ENCODE measurements at regions of chr12 and their contacts with region 1.

Region 1: DNA sequence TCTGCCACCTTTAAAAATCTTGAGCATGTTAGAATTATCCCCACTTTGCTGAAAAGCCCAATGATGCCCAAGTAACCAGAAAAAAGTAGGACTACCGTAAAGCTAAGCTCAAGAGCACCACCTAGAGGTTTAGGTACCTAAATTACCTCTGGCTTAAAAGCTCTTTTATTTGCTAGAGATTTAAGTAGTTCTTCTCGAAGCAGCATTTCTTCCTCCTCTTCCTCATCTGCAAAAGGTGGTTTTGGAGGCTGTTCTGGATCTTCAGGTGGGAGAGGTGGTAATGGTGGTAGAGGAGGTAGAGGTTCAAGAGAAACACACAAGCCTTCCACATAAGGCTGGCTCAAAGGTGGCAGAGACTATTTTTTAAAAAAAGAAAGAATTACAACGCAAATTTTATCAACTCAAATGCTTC is 26.9 kb downstream of the ZFC3H1 start:
- DNase-seq: peak in 1 of 2 donors; percentile 19
- ATAC-seq: no peak
- H3K4me3 ChIP-seq: no peak overlapping the region
- H3K27ac ChIP-seq: no peak overlapping the region
- H3K4me1 ChIP-seq: peaks cover 0 to 9% (median 0%) of the 10 kb centered on the region in 9 donors
- H3K27me3 ChIP-seq: no peaks in the 10 kb centered on the region
- CTCF ChIP-seq: peak; percentile 38 to 83 (median 72)

Region 2: DNA sequence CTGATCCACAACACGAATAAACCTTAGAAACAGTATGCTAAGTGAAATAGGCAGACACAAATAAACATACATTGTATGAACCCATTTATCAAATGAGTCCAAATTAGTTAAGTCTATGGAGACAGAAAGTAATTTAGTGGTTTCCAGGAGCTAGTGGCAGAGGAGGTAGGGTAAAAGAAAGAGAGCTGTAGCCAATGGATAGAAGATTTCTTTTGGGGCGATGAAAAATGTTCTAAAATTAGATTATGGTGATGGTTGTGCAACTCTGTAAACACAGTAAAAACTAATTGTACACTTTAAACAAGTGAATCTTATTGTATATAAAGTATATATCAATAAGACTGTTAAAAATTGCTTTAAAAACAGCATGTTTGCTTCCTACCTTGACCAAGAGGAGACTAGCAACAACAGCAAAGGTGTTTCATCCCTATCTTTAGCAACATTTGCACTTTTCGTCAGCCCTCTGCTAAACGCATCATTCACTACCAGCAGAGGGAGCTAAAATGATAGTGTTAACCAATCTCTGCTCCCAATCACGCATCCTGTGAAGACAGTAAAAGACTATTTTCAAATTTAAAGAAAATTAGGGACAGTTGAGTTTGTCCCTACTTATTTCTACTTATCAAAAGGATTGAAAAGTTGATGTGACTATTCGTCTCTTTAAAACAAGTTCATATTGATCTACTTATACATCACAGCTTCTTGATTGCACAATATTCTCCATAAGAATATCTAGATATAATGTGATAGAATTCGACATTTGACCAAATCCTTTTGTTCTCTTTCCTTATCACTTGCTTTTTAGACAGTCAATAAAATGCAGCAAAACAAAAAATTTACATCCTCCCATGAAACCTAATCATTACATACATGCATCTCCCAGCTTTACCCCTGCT is 221.1 kb before region 1 on chr12:
- intact Hi-C with region 1: loop called in 3 of 10 experiments (anchors 5 kb)
- DNase-seq: peak in 1 of 2 donors; percentile 29
- ATAC-seq: peak in 5 of 8 donors; percentile 56 to 78 (median 59)
- H3K4me3 ChIP-seq: no peak overlapping the region
- H3K27ac ChIP-seq: no peak overlapping the region
- H3K4me1 ChIP-seq: no peaks in the 10 kb centered on the region
- H3K27me3 ChIP-seq: no peaks in the 10 kb centered on the region
- CTCF ChIP-seq: peak; percentile 42 to 81 (median 75)

Region 3: GRCh38 chr12:71610031-71610795 is 26.5 kb before region 1 on chr12:
- intact Hi-C with region 1: loop called in 1 of 10 experiments (anchors 2 kb)
- DNase-seq: no peak
- ATAC-seq: no peak
- H3K4me3 ChIP-seq: no peak overlapping the region
- H3K27ac ChIP-seq: no peak overlapping the region
- H3K4me1 ChIP-seq: peaks cover 0 to 5% (median 0%) of the 10 kb centered on the region in 9 donors
- H3K27me3 ChIP-seq: no peaks in the 10 kb centered on the region
- CTCF ChIP-seq: no peak

Region 4: GRCh38 chr12:71754461-71755145 is 117.9 kb after region 1 on chr12 and contains the start of gene RAB21:
- intact Hi-C with region 1: loop called in 4 of 10 experiments (anchors 2 to 10 kb)
- DNase-seq: peak; percentile 99
- ATAC-seq: peak; percentile 96 to 98 (median 98)
- H3K4me3 ChIP-seq: peak within 1 kb of the TSS; percentile 75 to 97 (median 88)
- H3K27ac ChIP-seq: peak within 1 kb of the TSS; percentile 93 to 99 (median 96)
- H3K4me1 ChIP-seq: peaks cover 0 to 44% (median 32%) of the 10 kb centered on the region in 9 donors
- H3K27me3 ChIP-seq: peaks cover 0 to 14% (median 0%) of the 10 kb centered on the region in 7 donors
- CTCF ChIP-seq: peak in 7 of 9 donors; percentile 23 to 53 (median 34)
- total RNA-seq, gene RAB21: 137 to 271 (median 211) TPM

Measured in heart right ventricle (tissue), 16 donors.